K562 (cell line): ENCODE measurements at regions of chr1 and their contacts with region 1.

Region 1: GRCh38 chr1:198167436-198167934 is 10.7 kb downstream of the NEK7 start:
- DNase-seq: peak; percentile 32 to 80 (median 46)
- ATAC-seq: peak; percentile 56
- H3K4me3 ChIP-seq: no peak overlapping the region
- H3K27ac ChIP-seq: no peak overlapping the region; the same call in 2 of the 3 replicates
- H3K4me1 ChIP-seq: peaks cover 2 to 55% of the 10 kb centered on the region in 2 experiments; a peak in 4 of 5 replicates
- H3K27me3 ChIP-seq: no peaks in the 10 kb centered on the region
- CTCF ChIP-seq: no peak
- EP300 ChIP-seq: peak; percentile 50
- POLR2A ChIP-seq: no peak
- RAD21 ChIP-seq: no peak

Region 2: DNA sequence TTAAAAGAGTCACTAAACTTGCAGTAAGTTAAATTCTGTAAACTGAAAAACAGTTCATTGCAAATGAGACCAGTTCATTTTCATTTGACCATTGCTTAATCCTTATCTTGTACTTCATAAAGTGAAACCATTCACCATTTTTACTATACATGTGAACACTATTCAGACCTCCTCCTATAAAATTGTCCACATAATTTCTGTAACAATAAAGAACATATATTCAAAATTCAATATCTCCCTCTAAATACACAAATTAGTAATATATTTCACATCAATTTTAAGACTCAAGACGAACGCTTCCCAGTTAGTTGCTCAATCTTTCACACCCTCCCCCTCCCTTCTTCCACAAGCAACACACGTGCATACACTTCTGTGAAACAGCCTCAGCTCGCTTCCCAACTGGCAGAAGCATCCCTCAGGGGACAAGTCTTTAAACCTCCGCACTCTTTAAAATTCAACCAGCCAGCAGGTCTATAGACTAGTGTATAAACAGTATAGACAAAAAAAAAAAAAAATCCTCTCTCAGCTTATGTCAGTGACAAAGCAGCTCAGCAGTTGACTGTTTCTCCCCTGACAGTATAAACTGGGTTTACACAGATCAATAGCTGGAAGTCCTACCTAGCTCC is 491.8 kb before region 1 on chr1:
- CTCF ChIA-PET with region 1: no interaction called
- POLR2A ChIA-PET with region 1: no interaction called
- in situ Hi-C with region 1: no loop called
- intact Hi-C with region 1: loop called (anchors 10 kb)
- DNase-seq: peak in 2 of 4 experiments; percentile 39 to 61
- ATAC-seq: peak; percentile 75
- H3K4me3 ChIP-seq: peak overlapping the region; percentile 8; the same call in 1 of the 2 replicates
- H3K27ac ChIP-seq: peak overlapping the region; percentile 49
- H3K4me1 ChIP-seq: peaks cover 0 to 13% of the 10 kb centered on the region in 2 experiments; a peak in 2 of 5 replicates
- H3K27me3 ChIP-seq: no peaks in the 10 kb centered on the region
- CTCF ChIP-seq: no peak
- EP300 ChIP-seq: no peak
- POLR2A ChIP-seq: no peak
- RAD21 ChIP-seq: no peak